ENCODE measurements at regions of chr4 and their contacts with region 1.

Region 1: GRCh38 chr4:77819843-77820648 is 878 bp upstream of the CNOT6L start:
- DNase-seq: peak; percentile 98
- ATAC-seq: peak; percentile 82
- H3K4me3 Mint-ChIP-seq: peak overlapping the region; percentile 99
- H3K27ac Mint-ChIP-seq: peak overlapping the region; percentile 97
- H3K4me1 Mint-ChIP-seq: peaks cover 46% of the 10 kb centered on the region
- H3K27me3 Mint-ChIP-seq: no peaks in the 10 kb centered on the region

Region 2: DNA sequence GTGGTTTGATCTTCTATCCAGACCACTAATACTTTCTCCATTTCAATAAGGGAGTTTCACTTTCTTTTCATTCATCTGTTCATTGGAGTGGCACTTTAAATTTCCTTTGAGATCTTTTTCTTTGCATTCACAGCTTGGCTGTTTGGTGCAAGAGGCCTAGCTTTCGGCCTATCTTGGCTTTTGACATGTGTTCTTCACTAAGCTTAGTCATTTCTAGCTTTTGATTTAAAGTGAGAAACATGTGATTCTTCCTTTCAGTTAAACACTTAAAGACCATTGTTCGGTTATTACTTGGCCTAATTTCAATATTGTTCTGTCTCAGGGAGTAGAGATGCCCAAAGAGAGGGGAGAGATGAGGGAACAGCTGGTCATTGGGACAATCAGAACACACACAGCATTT is 190.2 kb before region 1 on chr4:
- CTCF ChIA-PET with region 1: interaction called, 3 read pairs
- POLR2A ChIA-PET with region 1: no interaction called
- intact Hi-C with region 1: loop called in 1 of 2 experiments (anchors 5 kb)
- DNase-seq: peak; percentile 40
- ATAC-seq: peak; percentile 93
- H3K4me3 Mint-ChIP-seq: no peak overlapping the region
- H3K27ac Mint-ChIP-seq: peak overlapping the region; percentile 23
- H3K4me1 Mint-ChIP-seq: peaks cover 16% of the 10 kb centered on the region
- H3K27me3 Mint-ChIP-seq: peaks cover 2% of the 10 kb centered on the region

Region 3: GRCh38 chr4:77800483-77801259 is 19.4 kb before region 1 on chr4:
- CTCF ChIA-PET with region 1: interaction called, 14 read pairs
- POLR2A ChIA-PET with region 1: interaction called, 14 read pairs
- intact Hi-C with region 1: loop called (anchors 1 to 2 kb)
- DNase-seq: no peak
- ATAC-seq: peak; percentile 63
- H3K4me3 Mint-ChIP-seq: peak overlapping the region; percentile 68
- H3K27ac Mint-ChIP-seq: peak overlapping the region; percentile 97
- H3K4me1 Mint-ChIP-seq: peaks cover 75% of the 10 kb centered on the region
- H3K27me3 Mint-ChIP-seq: no peaks in the 10 kb centered on the region

Region 4: DNA sequence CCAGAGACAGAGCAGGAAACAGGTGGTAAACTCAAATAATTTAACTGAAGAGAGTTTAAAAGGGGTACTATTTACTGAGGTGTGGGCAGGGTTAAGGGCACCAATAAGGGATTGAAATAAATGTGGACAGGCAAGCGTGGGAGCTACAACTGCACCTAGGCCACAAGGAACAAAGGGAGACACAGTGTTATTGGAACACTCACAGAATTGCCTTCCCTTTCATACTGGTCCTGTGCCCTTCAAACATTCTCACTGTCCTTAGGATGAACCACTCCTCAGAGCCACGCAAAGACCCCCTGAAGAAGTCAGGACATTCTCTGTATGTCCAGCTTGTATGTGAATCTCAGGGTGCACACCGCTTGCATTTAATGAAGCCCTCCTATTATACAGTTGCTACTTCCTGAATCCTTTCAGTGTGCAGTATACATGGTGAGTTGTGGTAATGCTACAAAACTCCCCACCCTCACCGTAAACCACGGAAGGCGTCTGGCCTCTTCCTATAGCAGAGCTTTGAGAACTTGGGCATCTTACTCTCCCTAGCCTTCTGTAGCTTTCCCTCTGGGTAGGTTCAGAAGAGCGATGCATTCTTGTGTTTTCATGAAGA is 32.9 kb after region 1 on chr4:
- CTCF ChIA-PET with region 1: interaction called, 18 read pairs
- POLR2A ChIA-PET with region 1: interaction called, 8 read pairs
- intact Hi-C with region 1: no loop called
- DNase-seq: peak; percentile 80
- ATAC-seq: peak; percentile 86
- H3K4me3 Mint-ChIP-seq: peak overlapping the region; percentile 64
- H3K27ac Mint-ChIP-seq: peak overlapping the region; percentile 100
- H3K4me1 Mint-ChIP-seq: peaks cover 57% of the 10 kb centered on the region
- H3K27me3 Mint-ChIP-seq: no peaks in the 10 kb centered on the region

Region 5: GRCh38 chr4:78775303-78776030 is 955.4 kb after region 1 on chr4:
- CTCF ChIA-PET with region 1: no interaction called
- POLR2A ChIA-PET with region 1: no interaction called
- intact Hi-C with region 1: loop called in 1 of 2 experiments (anchors 5 kb)
- DNase-seq: peak; percentile 91
- ATAC-seq: peak; percentile 75
- H3K4me3 Mint-ChIP-seq: peak overlapping the region; percentile 84
- H3K27ac Mint-ChIP-seq: peak overlapping the region; percentile 96
- H3K4me1 Mint-ChIP-seq: peaks cover 17% of the 10 kb centered on the region
- H3K27me3 Mint-ChIP-seq: no peaks in the 10 kb centered on the region

Measured in activated CD4-positive, alpha-beta T cell treated with anti-CD3 and anti-CD28 coated beads for 36 hours (primary cell).